ENCODE measurements at regions of chr7 and their contacts with region 1.

Region 1: DNA sequence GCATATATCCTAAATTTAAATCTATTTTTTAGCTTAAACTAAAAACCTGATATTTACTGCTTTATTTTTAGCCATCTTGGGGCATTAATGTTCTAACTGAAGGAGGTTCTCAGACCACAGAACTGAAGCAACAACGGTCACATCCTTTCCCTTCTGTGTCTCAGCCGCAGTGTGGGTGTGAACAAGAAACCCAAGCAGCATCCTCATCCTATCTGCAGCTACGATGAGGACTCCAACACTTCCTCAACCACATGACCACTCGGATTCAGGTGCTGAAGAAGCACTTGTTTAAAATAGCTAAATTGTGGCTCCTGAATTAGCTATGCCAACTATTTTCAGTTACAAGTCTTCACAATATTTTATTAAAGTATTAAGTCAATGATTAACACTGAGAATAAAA is 5.3 kb downstream of the ESYT2 start:
- DNase-seq: peak; percentile 83
- H3K4me3 Mint-ChIP-seq: peak overlapping the region; percentile 3
- H3K27ac Mint-ChIP-seq: peak overlapping the region; percentile 75
- H3K4me1 Mint-ChIP-seq: peaks cover 63% of the 10 kb centered on the region
- H3K27me3 Mint-ChIP-seq: no peaks in the 10 kb centered on the region

Region 2: DNA sequence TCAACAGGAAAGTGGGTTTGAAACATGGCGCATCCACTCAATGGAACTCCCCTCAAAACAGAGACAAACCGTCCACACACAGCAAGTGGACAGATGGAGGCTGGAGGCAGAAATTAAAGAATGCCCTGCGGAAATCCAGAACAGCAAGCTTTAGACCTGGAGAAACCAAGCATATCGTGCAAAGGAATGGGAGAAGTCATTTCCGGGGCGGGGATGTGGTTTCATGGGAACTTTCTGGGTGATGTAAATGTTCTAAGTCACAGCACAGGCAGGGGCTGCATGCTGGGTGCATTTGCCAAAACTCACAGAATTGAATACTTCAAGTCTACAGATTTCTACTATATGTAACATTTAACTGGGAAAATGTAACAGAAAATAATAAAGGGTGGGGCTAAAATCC is 449.4 kb before region 1 on chr7:
- CTCF ChIA-PET with region 1: no interaction called
- POLR2A ChIA-PET with region 1: no interaction called
- intact Hi-C with region 1: no loop called
- DNase-seq: no peak
- H3K4me3 Mint-ChIP-seq: no peak overlapping the region
- H3K27ac Mint-ChIP-seq: no peak overlapping the region
- H3K4me1 Mint-ChIP-seq: peaks cover 8% of the 10 kb centered on the region
- H3K27me3 Mint-ChIP-seq: peaks cover 11% of the 10 kb centered on the region

Region 3: DNA sequence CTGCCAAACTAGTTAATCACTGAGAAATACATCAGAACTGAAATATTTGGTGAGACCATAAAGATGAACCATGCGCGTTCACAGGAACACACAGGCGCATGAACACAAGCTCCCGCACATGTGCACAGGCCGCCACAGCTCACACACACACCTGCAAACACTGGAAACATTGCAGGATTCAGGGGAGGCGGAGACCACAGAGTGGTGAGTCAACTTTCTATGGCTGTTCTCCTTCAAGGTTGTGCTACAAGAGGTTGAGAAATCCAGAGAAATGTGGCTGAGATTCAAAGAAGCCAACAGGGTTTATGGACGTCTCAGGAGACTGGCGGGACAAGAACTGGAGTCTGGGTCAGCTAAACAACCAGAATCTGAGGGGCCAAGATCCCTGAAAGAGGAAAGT is 12.6 kb before region 1 on chr7:
- CTCF ChIA-PET with region 1: interaction called, 5 read pairs
- POLR2A ChIA-PET with region 1: interaction called, 22 read pairs
- intact Hi-C with region 1: loop called (anchors 1 kb)
- DNase-seq: peak; percentile 82
- H3K4me3 Mint-ChIP-seq: peak overlapping the region; percentile 60
- H3K27ac Mint-ChIP-seq: peak overlapping the region; percentile 91
- H3K4me1 Mint-ChIP-seq: peaks cover 76% of the 10 kb centered on the region
- H3K27me3 Mint-ChIP-seq: no peaks in the 10 kb centered on the region